ENCODE measurements at regions of chr12 and their contacts with region 1.

Region 1: GRCh38 chr12:52879394-52880351 is 25.2 kb downstream of the KRT8 start:
- DNase-seq: peak; percentile 88 to 90
- H3K4me3 ChIP-seq: no peak overlapping the region
- H3K4me3 Mint-ChIP-seq: peak overlapping the region; percentile 45
- H3K27ac Mint-ChIP-seq: no peak overlapping the region
- H3K4me1 ChIP-seq: peaks cover 27% of the 10 kb centered on the region
- H3K4me1 Mint-ChIP-seq: peaks cover 10% of the 10 kb centered on the region
- H3K27me3 ChIP-seq: no peaks in the 10 kb centered on the region
- H3K27me3 Mint-ChIP-seq: no peaks in the 10 kb centered on the region
- CTCF ChIP-seq: peak; percentile 76 to 88

Region 2: DNA sequence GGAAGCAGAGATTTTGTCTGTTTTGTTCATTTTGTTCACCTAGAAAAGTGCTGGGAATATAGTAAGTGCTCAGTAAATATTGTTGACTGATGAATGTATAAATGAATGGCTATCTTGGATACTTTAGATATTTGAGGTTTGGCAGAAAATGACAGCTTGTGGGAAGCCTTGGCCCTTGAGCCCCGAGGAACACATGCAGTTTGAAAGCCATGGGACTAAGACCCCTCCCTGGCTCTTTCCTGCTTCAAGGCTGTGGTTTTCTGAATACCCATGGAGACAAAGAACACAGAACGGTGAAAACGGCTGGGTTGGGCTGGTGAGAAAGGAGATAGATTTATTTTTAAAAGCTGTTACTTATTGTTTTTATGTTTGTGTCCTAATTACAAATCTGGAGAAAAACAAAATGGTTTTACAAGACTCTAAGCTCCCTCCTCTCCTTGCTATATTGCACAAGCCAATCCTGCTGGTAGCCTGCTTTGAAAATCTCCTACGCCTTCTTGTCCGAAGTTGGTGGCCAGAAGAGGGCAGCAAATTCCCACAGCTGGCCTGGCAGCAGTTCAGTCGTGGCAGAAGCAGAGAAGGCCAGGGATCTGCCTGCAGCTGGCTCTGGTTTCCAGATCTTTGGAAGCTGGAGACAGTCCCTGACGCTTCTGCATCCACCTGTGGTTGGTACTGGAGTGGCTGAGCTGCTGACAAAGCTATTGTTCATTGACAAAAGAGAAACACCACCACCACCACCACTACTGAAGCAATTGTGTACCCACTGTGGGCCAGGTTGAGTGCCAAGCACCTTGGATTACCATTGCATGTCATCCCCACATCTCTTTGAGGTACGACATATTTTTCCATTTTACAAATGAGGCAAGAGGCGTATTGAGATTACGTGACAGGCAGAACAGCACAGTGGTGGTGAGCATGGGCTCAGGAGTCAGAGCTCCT is 507.2 kb before region 1 on chr12:
- CTCF ChIA-PET with region 1: interaction called, 6 read pairs
- POLR2A ChIA-PET with region 1: no interaction called
- intact Hi-C with region 1: loop called (anchors 1 kb)
- DNase-seq: peak; percentile 78 to 86
- H3K4me3 ChIP-seq: no peak overlapping the region
- H3K4me3 Mint-ChIP-seq: no peak overlapping the region
- H3K27ac Mint-ChIP-seq: no peak overlapping the region
- H3K4me1 ChIP-seq: no peaks in the 10 kb centered on the region
- H3K4me1 Mint-ChIP-seq: peaks cover 8% of the 10 kb centered on the region
- H3K27me3 ChIP-seq: no peaks in the 10 kb centered on the region
- H3K27me3 Mint-ChIP-seq: peaks cover 3% of the 10 kb centered on the region
- CTCF ChIP-seq: peak; percentile 76 to 91

Region 3: DNA sequence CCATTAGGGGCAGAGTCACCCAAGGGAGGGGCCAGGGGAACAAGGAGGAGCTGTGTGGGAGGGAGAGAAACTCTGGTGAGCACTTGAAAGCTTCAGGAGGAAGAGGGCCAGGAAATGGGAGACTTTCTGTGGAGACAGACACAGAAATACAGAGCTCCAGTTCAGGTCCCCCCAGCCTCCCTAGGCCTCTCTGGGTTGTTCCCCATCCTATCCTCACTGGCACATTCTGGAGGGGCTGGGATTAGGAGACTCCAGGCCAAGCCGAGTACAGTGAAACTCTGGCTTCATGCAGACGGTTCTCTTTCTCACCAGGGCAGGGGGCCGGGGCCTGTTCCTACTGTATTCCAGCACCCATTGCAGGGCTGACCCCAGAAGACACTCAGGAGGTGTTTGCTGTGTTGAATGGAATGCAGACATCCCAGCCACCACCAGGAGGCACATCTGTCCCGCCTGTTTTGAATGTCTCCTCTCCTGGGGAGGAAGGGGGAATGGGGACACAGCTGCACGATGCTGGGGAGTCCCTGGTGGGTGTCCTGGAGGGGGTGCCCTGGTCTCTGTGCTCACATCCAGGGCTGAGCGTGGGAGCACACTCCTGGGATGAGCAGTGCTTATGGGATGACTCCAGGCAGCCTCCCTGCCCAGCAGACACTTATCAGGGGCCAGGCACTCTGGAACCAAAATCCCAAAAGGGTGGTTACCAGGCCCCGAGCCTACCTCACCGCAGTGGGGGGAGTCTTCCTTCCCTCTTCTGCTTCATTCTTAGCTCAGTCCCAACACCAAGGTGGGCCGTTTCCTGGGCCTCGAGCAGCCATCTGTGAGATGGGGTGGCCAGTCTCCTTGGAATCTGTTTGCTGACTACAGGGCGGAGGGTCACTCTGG is 488.7 kb before region 1 on chr12:
- CTCF ChIA-PET with region 1: interaction called, 15 read pairs
- POLR2A ChIA-PET with region 1: no interaction called
- intact Hi-C with region 1: loop called (anchors 5 kb)
- DNase-seq: peak in 1 of 2 experiments; percentile 47
- H3K4me3 ChIP-seq: no peak overlapping the region
- H3K4me3 Mint-ChIP-seq: no peak overlapping the region
- H3K27ac Mint-ChIP-seq: no peak overlapping the region
- H3K4me1 ChIP-seq: no peaks in the 10 kb centered on the region
- H3K4me1 Mint-ChIP-seq: no peaks in the 10 kb centered on the region
- H3K27me3 ChIP-seq: no peaks in the 10 kb centered on the region; the same call in 1 of the 2 replicates
- H3K27me3 Mint-ChIP-seq: peaks cover 2% of the 10 kb centered on the region
- CTCF ChIP-seq: peak; percentile 73 to 77

Region 4: DNA sequence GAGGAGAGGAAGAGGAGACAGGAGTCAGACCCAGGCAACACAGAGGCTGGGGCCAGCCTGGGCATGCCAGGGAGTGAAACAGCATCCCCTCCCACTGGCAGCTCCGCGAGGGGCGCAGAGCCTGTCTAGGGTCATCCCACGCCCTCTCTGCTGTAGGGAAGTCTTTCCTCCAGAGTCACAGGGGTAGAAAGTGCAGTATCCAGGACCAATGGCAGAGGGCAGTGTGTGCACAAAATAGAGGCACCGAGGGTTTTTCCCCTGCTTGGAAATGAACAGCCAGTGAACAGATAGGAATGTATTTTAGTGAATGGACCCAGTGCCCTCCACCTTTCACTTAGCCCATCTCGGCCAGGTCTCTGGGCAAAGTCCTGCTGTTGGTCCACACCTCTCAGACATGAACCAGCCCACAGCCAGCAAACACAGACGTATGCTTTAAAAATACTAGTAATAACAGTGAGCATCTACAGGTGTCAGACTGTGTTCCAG is 296.7 kb before region 1 on chr12:
- CTCF ChIA-PET with region 1: interaction called, 7 read pairs
- POLR2A ChIA-PET with region 1: no interaction called
- intact Hi-C with region 1: loop called (anchors 1 kb)
- DNase-seq: peak; percentile 60 to 74
- H3K4me3 ChIP-seq: no peak overlapping the region
- H3K4me3 Mint-ChIP-seq: no peak overlapping the region
- H3K27ac Mint-ChIP-seq: no peak overlapping the region
- H3K4me1 ChIP-seq: peaks cover 11% of the 10 kb centered on the region; the same call in 1 of the 2 replicates
- H3K4me1 Mint-ChIP-seq: no peaks in the 10 kb centered on the region
- H3K27me3 ChIP-seq: no peaks in the 10 kb centered on the region
- H3K27me3 Mint-ChIP-seq: peaks cover 4% of the 10 kb centered on the region
- CTCF ChIP-seq: peak; percentile 62 to 75

Region 5: DNA sequence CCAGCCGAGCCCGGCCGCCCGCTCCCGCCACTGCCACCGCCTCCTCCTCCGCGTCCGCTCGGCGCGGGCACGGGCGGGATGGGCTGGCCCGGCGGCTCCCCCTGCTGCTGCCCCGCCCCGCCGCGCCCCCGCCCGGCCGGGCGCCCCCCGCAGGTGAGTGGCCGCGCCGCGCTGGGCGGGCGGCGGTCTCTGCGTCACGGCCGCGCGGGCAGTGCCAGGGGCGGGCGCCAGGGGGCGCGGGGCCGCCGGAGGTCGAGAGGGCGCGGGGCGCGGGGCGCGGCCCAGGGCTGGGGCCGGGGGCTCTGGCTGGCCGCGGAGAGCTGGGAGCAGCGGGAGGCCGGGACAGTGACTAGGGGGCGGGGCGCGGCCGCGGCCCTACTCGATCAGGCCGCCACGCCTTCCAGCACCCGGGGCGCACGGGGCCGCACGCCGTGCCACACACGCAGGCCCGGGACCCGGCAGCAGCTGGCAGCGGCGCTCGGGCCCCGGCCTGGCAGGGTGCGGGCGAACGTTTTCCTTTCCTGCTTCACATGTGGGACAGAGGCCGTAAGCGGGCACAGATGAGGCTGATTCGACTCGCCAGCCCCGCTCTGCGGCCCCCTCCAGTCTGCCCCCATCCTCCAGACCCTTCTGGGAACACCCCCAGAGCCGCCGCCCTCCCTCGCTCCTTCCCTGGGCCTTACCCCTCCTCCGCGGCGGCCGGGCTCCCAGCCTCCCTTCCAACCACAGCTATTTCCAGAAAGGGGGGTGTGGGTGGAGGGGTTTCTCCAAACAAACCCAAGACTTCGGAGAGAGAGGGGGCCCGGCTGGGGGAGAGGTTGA is 167.8 kb after region 1 on chr12:
- CTCF ChIA-PET with region 1: interaction called, 4 read pairs
- POLR2A ChIA-PET with region 1: no interaction called
- intact Hi-C with region 1: loop called (anchors 5 kb)
- DNase-seq: peak; percentile 39 to 80
- H3K4me3 ChIP-seq: peak overlapping the region; percentile 74; the same call in 1 of the 2 replicates
- H3K4me3 Mint-ChIP-seq: peak overlapping the region; percentile 87
- H3K27ac Mint-ChIP-seq: peak overlapping the region; percentile 82
- H3K4me1 ChIP-seq: peaks cover 75% of the 10 kb centered on the region
- H3K4me1 Mint-ChIP-seq: peaks cover 35% of the 10 kb centered on the region
- H3K27me3 ChIP-seq: no peaks in the 10 kb centered on the region
- H3K27me3 Mint-ChIP-seq: no peaks in the 10 kb centered on the region
- CTCF ChIP-seq: peak in 1 of 2 experiments; percentile 5

Region 6: DNA sequence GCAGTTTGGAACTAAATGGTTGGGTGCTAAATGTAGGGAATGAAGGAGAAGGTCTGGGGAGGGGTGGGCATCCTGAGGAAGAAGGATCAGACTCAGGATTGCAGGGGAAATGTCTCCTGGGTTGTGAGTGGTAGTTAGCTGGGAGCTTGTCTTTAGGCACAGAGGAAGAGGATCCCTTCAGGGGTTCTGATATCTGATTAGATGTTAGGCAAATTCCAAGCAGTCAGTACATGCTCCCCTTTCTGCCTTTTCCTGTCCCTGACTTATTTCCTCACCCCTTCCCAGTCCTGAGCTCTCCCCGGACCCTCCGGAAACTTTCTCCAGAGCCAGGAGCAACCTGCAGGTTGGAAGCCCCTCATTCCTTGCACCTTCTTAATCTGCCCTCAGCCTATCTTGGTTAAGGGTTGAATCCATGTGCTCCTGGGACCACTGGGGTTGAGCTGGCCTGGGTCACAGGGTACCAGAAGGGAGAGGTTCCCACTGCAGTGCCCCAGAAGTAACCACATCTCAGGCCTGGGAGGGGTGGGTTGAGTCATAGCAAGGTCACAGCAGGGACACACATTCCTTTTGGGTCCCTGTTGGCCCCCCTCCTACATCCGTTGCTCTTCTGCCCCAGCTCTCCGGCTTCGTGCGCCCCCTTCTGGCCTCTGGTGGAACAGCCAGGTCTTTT is 219.4 kb after region 1 on chr12:
- CTCF ChIA-PET with region 1: no interaction called
- POLR2A ChIA-PET with region 1: no interaction called
- intact Hi-C with region 1: no loop called
- DNase-seq: peak; percentile 90
- H3K4me3 ChIP-seq: no peak overlapping the region
- H3K4me3 Mint-ChIP-seq: peak overlapping the region; percentile 68
- H3K27ac Mint-ChIP-seq: peak overlapping the region; percentile 49
- H3K4me1 ChIP-seq: peaks cover 36% of the 10 kb centered on the region
- H3K4me1 Mint-ChIP-seq: peaks cover 42% of the 10 kb centered on the region
- H3K27me3 ChIP-seq: no peaks in the 10 kb centered on the region
- H3K27me3 Mint-ChIP-seq: no peaks in the 10 kb centered on the region
- CTCF ChIP-seq: peak; percentile 92 to 93